ENCODE measurements at regions of chr12 and their contacts with region 1.

Region 1: DNA sequence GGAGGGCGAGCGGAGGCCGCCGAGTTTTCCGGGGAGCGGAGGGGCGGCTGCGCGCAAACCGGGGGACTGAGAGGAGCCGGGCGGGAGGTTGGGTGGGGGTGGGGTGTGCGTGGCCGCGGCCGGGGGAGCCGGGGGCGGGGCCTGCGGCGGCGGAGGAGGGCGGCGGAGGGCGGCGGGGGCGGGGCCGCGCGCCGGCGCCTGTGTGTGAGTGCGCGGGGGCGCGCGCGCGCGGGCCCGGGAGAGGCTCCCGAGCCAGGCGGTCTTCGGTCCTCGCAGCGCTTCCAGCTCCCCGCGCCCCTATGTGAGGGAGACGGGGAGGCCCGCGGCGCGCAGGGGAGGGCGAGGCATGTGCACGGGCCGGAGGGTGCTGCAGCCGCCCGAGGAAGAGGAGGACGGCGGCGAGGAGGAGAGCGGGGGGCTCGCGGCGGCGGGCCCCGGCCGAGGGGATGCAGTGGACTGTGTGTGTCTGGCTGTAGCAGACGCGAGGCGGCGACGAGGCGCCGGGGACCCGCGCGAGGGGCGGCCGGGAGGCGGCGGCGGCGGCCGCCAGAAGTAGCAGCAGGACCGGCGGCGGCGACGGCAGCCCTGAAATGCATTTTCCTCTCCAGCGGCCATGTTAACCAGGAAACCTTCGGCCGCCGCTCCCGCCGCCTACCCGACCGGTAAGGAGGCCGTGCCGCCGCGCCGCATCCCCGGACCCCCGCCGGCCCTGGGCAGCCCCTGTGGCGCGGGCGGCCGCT is at the start of gene DYRK2:
- DNase-seq: peak; percentile 83
- ATAC-seq: peak; percentile 30
- H3K4me3 Mint-ChIP-seq: peak within 1 kb of the TSS; percentile 98
- H3K27ac Mint-ChIP-seq: peak within 1 kb of the TSS; percentile 78
- H3K4me1 Mint-ChIP-seq: peaks cover 45% of the 10 kb centered on the region
- H3K27me3 Mint-ChIP-seq: no peaks in the 10 kb centered on the region
- total RNA-seq, gene DYRK2: 19.2 to 21.5 TPM

Region 2: DNA sequence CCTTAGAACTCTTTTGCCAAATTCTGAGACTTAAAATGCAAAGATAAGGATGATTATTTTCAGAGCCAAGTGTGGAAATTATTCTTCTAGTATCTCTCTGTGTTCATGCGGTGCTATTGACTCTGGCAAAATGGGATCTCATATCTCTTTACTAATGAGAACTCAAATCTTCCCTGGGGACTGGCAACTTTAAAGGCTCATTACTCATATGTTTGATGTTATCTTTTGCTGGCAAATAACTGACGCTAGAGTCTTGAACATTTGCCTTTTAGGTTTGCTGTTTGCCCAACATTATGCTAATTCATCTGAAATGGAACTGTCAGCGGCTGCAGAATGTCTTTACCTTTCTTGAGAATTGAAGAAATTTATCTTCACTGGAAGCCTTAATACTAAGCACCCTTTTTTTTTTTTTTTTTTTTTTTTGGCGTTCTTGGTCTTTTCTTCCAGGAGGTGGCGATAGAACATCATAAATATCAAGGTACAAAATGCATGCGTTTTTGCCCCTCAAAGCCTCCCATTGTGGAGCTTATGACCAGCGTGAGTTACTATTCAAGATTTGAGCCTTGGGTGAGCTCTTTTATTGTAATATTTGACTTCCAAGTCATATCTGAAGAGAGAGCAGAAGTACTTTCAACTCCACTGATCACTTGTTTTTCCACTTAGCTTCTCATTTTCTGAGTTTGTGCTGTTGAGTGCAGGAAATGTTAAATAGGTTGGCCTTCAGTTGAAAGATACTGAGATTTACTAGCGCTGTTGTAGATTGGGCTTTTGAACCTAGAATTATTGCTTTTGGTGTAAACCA is 292.9 kb before region 1 on chr12:
- CTCF ChIA-PET with region 1: interaction called, 4 read pairs
- POLR2A ChIA-PET with region 1: no interaction called
- intact Hi-C with region 1: loop called (anchors 5 to 10 kb)
- DNase-seq: peak; percentile 22
- ATAC-seq: peak; percentile 65
- H3K4me3 Mint-ChIP-seq: no peak overlapping the region
- H3K27ac Mint-ChIP-seq: no peak overlapping the region
- H3K4me1 Mint-ChIP-seq: peaks cover 29% of the 10 kb centered on the region
- H3K27me3 Mint-ChIP-seq: no peaks in the 10 kb centered on the region

Region 3: GRCh38 chr12:67592216-67593011 is 56.3 kb before region 1 on chr12:
- CTCF ChIA-PET with region 1: interaction called, 3 read pairs
- POLR2A ChIA-PET with region 1: no interaction called
- intact Hi-C with region 1: loop called in 1 of 2 experiments (anchors 5 kb)
- DNase-seq: peak; percentile 7
- ATAC-seq: peak; percentile 64
- H3K4me3 Mint-ChIP-seq: no peak overlapping the region
- H3K27ac Mint-ChIP-seq: peak overlapping the region; percentile 66
- H3K4me1 Mint-ChIP-seq: peaks cover 47% of the 10 kb centered on the region
- H3K27me3 Mint-ChIP-seq: no peaks in the 10 kb centered on the region

Region 4: GRCh38 chr12:67661311-67662021 is 12.8 kb after region 1 on chr12:
- CTCF ChIA-PET with region 1: no interaction called
- POLR2A ChIA-PET with region 1: no interaction called
- intact Hi-C with region 1: no loop called
- DNase-seq: no peak
- ATAC-seq: peak; percentile 53
- H3K4me3 Mint-ChIP-seq: no peak overlapping the region
- H3K27ac Mint-ChIP-seq: no peak overlapping the region
- H3K4me1 Mint-ChIP-seq: peaks cover 77% of the 10 kb centered on the region
- H3K27me3 Mint-ChIP-seq: no peaks in the 10 kb centered on the region

Region 5: DNA sequence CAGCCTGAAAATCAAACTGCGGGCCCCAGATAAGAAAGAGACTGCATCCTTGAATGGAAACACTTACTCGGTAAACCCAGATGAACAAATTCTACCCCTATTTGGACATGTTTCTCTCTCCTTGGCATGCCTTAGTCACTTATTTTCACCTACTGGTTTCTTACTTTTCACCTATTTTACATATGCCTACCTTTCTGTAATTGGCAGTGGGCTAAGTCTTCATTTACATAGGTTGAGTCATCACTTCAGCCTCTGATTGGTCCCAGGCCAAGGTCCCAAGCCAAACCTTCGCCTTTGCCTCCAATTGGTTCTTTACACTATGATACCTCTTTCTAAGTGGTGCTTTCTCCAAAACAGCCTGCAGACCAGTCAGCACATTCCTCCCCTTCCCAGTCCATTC is 111.1 kb after region 1 on chr12:
- CTCF ChIA-PET with region 1: no interaction called
- POLR2A ChIA-PET with region 1: no interaction called
- intact Hi-C with region 1: loop called in 1 of 2 experiments (anchors 2 kb)
- DNase-seq: peak; percentile 38
- ATAC-seq: peak; percentile 94
- H3K4me3 Mint-ChIP-seq: no peak overlapping the region
- H3K27ac Mint-ChIP-seq: peak overlapping the region; percentile 86
- H3K4me1 Mint-ChIP-seq: peaks cover 41% of the 10 kb centered on the region
- H3K27me3 Mint-ChIP-seq: no peaks in the 10 kb centered on the region

Region 6: DNA sequence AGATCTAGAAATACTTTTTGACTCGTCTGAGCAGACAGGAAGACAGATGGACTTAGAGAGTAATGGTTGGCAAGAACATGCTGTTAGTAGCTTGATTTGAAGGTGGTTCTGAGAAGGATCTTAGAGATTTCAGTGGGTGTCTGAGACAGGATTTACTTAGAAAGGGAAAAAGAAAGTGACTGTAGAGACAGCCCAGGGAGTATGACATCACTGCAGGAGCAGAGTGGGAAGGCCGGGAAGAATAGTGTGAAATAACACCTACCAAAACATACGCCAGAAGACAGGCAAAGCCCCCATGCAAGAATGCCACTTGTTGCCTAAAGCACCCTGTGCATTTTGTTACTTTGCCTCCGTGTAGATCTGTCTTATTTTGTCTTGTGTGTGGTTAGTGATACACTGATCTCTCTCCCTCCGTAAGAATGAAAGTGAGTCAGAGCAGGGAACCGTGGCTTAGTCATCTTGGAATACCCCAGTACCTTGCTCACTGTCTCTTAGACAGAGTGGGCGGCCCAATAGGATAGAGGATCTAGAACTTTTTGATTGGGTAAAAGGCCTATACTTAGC is 179.2 kb after region 1 on chr12:
- CTCF ChIA-PET with region 1: no interaction called
- POLR2A ChIA-PET with region 1: no interaction called
- intact Hi-C with region 1: loop called in 1 of 2 experiments (anchors 2 kb)
- DNase-seq: peak; percentile 77
- ATAC-seq: peak; percentile 99
- H3K4me3 Mint-ChIP-seq: peak overlapping the region; percentile 17
- H3K27ac Mint-ChIP-seq: peak overlapping the region; percentile 72
- H3K4me1 Mint-ChIP-seq: peaks cover 22% of the 10 kb centered on the region
- H3K27me3 Mint-ChIP-seq: no peaks in the 10 kb centered on the region

Measured in activated CD4-positive, alpha-beta T cell treated with anti-CD3 and anti-CD28 coated beads for 36 hours (primary cell).